ENCODE measurements at regions of chr2 and their contacts with region 1.

Region 1: GRCh38 chr2:68121873-68122679 is 35.6 kb upstream of the PNO1 start:
- DNase-seq: peak; percentile 65 to 94
- H3K4me3 ChIP-seq: no peak overlapping the region
- H3K4me1 ChIP-seq: no peaks in the 10 kb centered on the region; the same call in 1 of the 2 replicates
- H3K27me3 ChIP-seq: no peaks in the 10 kb centered on the region

Region 2: DNA sequence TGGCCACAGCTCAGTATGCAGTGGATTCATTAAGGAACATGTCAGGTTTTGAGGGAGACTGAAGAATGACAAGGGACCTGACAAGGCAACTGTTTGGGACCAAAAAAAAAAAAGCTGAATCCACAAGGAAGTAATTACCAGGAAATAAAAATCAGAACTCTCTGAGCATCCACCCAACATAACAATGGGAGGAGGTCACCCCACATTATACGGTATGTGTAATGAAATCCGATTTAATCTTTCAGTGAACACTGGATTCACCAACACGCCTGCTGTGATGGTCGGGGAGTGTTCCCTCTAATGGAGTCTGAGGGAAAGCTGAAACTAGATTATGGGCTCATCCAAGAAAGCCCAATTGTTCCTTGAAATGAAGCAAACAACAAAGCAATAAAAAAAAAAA is 395.7 kb before region 1 on chr2:
- in situ Hi-C with region 1: no loop called
- DNase-seq: no peak
- H3K4me3 ChIP-seq: no peak overlapping the region
- H3K4me1 ChIP-seq: no peaks in the 10 kb centered on the region
- H3K27me3 ChIP-seq: no peaks in the 10 kb centered on the region

Region 3: GRCh38 chr2:68295516-68295915 is 173.4 kb after region 1 on chr2:
- in situ Hi-C with region 1: loop called (anchors 10 kb)
- DNase-seq: no peak
- H3K4me3 ChIP-seq: no peak overlapping the region
- H3K4me1 ChIP-seq: no peaks in the 10 kb centered on the region
- H3K27me3 ChIP-seq: no peaks in the 10 kb centered on the region

Region 4: DNA sequence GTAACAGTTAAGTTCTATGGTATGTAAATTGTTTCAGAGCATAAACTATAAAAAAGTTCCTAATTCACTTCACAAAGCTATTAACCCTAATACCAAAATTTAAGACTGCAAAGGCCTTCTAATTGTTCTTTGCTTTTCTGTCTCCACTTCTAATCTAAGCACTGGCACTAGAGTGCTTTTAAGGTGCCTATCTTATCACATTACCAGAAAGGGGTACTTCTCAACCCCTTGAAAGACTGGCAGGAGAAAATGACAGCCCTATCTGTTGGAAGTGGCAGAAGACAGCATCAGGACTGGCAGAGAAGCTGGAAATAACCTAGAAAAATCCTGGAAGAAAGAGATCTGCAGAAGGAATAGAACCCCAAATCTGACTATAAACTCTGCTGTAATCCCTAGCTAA is 187.3 kb after region 1 on chr2:
- in situ Hi-C with region 1: no loop called
- DNase-seq: no peak
- H3K4me3 ChIP-seq: no peak overlapping the region
- H3K4me1 ChIP-seq: peaks cover 9% of the 10 kb centered on the region
- H3K27me3 ChIP-seq: no peaks in the 10 kb centered on the region

Region 5: DNA sequence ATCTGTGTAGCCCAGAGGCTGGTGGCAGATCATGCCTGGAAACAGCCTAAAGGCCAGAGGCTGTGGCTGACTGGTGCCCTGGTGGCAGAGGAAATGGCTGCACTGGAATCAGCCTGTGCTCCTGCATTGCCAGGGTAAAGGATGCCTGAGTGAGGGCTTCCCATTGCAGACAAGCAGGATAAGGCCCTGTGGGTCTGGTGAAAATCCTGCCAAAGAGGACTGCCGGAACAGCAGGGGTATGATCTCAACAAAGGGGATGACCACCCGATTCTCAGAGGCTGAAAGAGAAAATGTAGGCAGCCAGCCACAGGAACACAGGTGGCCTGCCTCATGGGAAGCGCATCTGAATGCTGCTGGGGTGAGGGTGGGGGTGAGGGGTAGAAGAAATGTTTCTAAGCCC is 296.8 kb after region 1 on chr2:
- in situ Hi-C with region 1: no loop called
- DNase-seq: no peak
- H3K4me3 ChIP-seq: no peak overlapping the region
- H3K4me1 ChIP-seq: no peaks in the 10 kb centered on the region
- H3K27me3 ChIP-seq: peaks cover 7% of the 10 kb centered on the region

Region 6: GRCh38 chr2:68441179-68441993 is 319.3 kb after region 1 on chr2:
- in situ Hi-C with region 1: loop called (anchors 25 kb)
- DNase-seq: peak; percentile 78 to 86
- H3K4me3 ChIP-seq: no peak overlapping the region
- H3K4me1 ChIP-seq: no peaks in the 10 kb centered on the region
- H3K27me3 ChIP-seq: peaks cover 4% of the 10 kb centered on the region; the same call in 1 of the 2 replicates

Region 7: DNA sequence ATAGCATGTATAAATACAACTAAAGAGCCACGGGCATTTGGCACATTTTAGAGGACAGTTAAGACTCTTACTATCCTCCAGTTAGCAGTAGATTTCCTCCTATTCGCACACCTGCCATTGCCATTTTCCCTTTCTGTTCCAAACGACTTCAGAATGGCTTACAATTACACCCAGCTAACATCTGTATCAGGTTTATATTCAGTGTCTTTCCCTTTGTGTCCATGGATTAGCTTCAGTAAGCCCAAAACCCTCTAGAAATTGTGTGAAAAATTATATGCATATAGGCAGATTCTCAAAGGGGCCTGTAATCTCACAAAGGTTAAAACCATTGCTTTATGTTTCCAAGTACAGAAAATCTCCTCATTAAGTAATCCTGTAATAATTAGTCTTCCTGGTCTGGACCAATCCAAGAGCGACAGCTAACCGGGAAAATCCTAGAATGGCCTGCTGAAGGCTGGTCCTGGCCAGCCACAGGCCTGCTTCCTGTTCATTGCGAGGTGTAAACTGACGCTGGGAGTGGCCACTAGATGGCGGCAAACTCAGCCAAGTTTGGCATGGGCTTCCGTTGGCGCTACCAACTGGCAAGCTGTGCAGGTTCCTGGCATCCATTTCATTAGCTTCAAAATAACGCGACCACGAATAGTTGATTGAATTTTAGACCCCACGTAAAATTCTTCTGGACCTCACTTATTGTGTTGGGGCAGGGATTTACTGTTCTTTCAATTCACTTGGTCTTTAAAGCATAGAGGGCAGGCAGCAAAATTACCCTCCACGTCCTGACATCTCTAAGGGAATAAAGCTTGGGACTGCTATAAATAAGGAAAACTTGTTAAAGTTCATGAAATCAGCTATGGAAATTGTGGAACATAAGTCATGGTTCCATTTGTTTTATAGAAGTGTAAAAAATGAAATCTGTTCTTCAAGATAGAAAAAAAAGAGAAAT is 629.6 kb after region 1 on chr2:
- in situ Hi-C with region 1: no loop called
- DNase-seq: peak; percentile 57 to 92
- H3K4me3 ChIP-seq: no peak overlapping the region
- H3K4me1 ChIP-seq: no peaks in the 10 kb centered on the region; the same call in 1 of the 2 replicates
- H3K27me3 ChIP-seq: no peaks in the 10 kb centered on the region